ENCODE measurements at regions of chr17 and their contacts with region 1.

Region 1: DNA sequence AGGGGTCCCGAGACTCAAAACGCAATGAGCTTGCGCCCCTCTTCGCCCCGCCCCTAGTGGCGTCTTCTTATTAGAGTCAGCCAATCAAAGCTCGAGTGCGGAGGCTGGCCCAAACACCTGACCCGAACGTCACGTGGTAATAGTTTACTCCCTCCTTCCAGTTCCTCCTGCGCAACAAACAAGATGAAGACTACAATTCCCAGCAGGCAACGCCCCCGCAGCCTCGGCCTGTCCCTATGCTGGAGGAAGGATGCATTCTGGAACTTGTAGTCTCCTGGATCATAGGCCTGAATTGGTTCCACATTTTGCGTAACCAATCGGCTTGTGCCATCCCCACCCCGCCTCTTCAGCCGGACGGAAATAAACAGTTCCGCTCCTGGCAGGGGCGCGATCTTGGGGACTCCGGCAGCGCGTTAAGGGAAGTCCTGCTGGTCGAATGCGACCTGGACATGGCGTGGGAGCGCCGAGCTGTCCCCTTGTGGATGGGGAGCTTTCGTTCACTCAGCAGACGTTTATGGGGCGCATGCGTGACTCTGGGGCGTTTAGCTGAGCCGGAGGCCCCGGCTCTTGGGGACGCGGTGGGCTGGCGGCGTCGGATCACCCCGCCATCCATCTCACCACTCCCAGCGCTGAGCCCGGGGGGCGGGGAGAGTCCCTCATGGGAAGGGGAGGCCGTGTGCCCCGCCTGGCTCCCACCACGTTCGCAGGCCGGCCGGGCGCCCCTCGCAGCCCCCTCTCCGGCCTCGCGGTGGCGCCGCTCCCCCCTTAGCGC is at the start of gene WBP2:
- DNase-seq: peak; percentile 99
- H3K4me3 Mint-ChIP-seq: no peak within 1 kb of the TSS
- H3K27ac Mint-ChIP-seq: peak within 1 kb of the TSS; percentile 74
- H3K4me1 Mint-ChIP-seq: peaks cover 39% of the 10 kb centered on the region
- H3K27me3 Mint-ChIP-seq: no peaks in the 10 kb centered on the region
- total RNA-seq, gene WBP2: 65.0 to 68.7 TPM

Region 2: GRCh38 chr17:75667021-75667790 is 188.3 kb before region 1 on chr17 and contains the starts of genes RECQL5 and SAP30BP:
- CTCF ChIA-PET with region 1: no interaction called
- intact Hi-C with region 1: loop called (anchors 1 kb)
- DNase-seq: peak; percentile 99
- H3K4me3 Mint-ChIP-seq: peak within 1 kb of the TSS; percentile 64
- H3K27ac Mint-ChIP-seq: no peak within 1 kb of the TSS
- H3K4me1 Mint-ChIP-seq: peaks cover 35% of the 10 kb centered on the region
- H3K27me3 Mint-ChIP-seq: no peaks in the 10 kb centered on the region
- total RNA-seq, gene RECQL5: 36.2 to 44.0 TPM
- total RNA-seq, gene SAP30BP: 68.3 TPM

Region 3: DNA sequence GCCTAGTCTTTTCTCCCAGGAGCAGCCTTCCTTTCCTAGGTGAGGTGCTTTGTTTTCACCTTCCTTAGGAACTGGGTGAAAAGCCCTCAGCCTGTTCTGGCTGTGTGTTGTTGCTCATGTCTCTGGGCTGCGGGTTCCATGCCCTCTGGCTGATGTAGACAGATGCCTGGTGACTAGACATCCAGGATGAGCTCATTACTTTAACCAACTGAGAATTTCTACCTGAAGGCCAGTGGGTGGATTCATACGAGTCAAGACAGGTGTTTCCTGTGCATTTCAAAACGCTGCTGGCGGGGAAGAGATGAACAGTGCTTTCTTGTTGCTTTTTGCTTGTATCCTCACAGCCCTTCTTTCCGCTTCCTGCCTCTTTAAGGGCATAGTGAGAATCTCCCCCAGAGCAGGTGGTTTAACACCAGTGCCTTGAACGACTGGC is 166.0 kb before region 1 on chr17:
- CTCF ChIA-PET with region 1: no interaction called
- intact Hi-C with region 1: loop called (anchors 2 kb)
- DNase-seq: peak; percentile 81
- H3K4me3 Mint-ChIP-seq: no peak overlapping the region
- H3K27ac Mint-ChIP-seq: peak overlapping the region; percentile 92
- H3K4me1 Mint-ChIP-seq: peaks cover 59% of the 10 kb centered on the region
- H3K27me3 Mint-ChIP-seq: no peaks in the 10 kb centered on the region

Region 4: GRCh38 chr17:75779231-75779986 is 76.1 kb before region 1 on chr17:
- CTCF ChIA-PET with region 1: interaction called, 4 read pairs
- intact Hi-C with region 1: loop called (anchors 1 kb)
- DNase-seq: peak; percentile 97
- H3K4me3 Mint-ChIP-seq: peak overlapping the region; percentile 91
- H3K27ac Mint-ChIP-seq: peak overlapping the region; percentile 99
- H3K4me1 Mint-ChIP-seq: peaks cover 54% of the 10 kb centered on the region
- H3K27me3 Mint-ChIP-seq: peaks cover 3% of the 10 kb centered on the region

Region 5: GRCh38 chr17:75877752-75878173 is 22.3 kb after region 1 on chr17:
- CTCF ChIA-PET with region 1: interaction called, 66 read pairs
- intact Hi-C with region 1: loop called (anchors 1 kb)
- DNase-seq: peak; percentile 74
- H3K4me3 Mint-ChIP-seq: peak overlapping the region; percentile 93
- H3K27ac Mint-ChIP-seq: peak overlapping the region; percentile 83
- H3K4me1 Mint-ChIP-seq: peaks cover 32% of the 10 kb centered on the region
- H3K27me3 Mint-ChIP-seq: peaks cover 3% of the 10 kb centered on the region

Region 6: DNA sequence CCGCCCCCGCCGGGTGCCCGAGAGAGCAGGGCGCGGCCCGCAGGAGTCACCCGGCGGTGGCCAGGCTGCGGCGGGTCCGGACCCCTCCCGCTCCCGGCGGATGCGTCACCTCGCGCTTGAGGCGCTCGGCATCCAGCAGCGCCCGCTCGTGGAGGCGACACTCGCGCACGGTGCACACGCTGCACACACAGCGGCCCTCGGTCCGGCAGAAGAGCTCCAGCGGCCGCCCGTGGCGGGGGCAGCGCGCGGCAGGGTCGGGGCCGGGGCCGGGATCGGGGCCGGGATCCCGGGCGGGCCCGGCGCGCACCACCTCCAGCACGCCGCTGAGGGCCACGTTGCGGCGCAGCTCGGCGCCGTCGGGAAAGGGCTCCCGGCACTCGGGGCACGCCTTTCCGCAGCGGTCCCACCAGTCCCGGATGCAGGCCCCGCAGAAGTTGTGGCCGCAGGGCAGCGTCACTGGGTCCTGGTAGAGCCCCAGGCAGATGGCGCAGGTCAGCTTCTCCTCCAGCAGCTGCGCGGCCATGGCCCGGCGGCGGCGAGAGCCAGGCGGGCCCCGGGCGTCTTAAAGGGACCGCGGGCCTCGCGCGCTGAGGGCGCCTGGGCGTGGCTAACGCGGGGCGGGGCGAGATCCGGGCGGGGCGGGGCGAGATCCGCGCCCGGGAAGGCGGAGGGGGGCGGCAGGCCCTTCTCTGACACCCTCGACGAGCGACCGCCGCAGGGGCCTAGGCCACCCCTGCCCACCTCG is 41.1 kb after region 1 on chr17 and contains the start of gene TRIM65:
- CTCF ChIA-PET with region 1: interaction called, 14 read pairs
- intact Hi-C with region 1: loop called (anchors 1 kb)
- DNase-seq: peak; percentile 83
- H3K4me3 Mint-ChIP-seq: peak within 1 kb of the TSS; percentile 79
- H3K27ac Mint-ChIP-seq: peak within 1 kb of the TSS; percentile 59
- H3K4me1 Mint-ChIP-seq: peaks cover 28% of the 10 kb centered on the region
- H3K27me3 Mint-ChIP-seq: no peaks in the 10 kb centered on the region
- total RNA-seq, gene TRIM65: 24.5 to 25.5 TPM

Region 7: DNA sequence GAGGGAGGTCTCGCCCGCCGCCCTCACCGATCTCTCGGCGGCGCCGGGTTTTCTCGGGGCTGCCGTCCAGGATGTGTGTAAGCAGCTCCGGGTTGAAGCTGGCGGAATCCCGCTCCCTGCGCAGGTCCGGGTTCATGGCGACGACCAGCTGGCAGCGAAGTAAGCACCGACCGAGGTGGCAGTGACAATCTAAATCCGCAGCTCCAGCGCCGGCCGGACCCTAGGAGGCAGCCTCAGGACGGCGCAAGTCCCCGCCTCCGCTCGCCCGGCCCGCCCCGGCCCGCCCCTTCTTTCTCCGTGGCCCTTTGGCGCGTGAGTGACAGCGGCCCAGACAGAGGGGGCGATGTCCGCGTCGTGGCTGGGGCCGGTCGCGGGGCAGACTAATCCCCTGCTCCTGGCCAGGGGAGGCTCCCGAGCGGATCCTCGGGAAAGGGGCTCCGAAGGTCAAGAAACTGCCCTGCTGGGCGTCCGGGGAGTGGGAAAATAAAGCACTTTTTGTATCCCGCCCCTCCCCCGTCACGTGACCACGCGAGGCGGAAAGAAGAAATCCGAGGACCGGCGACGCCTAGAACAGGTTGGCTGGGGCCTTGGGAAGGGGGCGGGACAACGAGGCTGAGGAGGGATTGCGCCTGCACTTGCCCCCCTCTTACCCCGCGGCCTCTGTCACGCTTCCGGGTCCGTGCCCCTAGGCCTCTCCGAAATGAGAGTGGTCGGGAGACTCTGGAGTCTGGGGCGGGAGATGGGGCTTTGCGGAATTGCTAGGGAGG is 123.6 kb after region 1 on chr17 and contains the starts of genes ACOX1 and TEN1:
- CTCF ChIA-PET with region 1: no interaction called
- intact Hi-C with region 1: loop called (anchors 1 kb)
- DNase-seq: peak; percentile 98
- H3K4me3 Mint-ChIP-seq: peak within 1 kb of the TSS; percentile 99
- H3K27ac Mint-ChIP-seq: peak within 1 kb of the TSS; percentile 100
- H3K4me1 Mint-ChIP-seq: peaks cover 30% of the 10 kb centered on the region
- H3K27me3 Mint-ChIP-seq: no peaks in the 10 kb centered on the region
- total RNA-seq, gene ACOX1: 31.4 to 34.9 TPM
- total RNA-seq, gene TEN1: 9.7 to 12.2 TPM

Measured in activated naive CD4-positive, alpha-beta T cell treated with anti-CD3 and anti-CD28 coated beads for 36 hours (primary cell).